MCF 10A (cell line): ENCODE measurements at regions of chr2 and their contacts with region 1.

Region 1: DNA sequence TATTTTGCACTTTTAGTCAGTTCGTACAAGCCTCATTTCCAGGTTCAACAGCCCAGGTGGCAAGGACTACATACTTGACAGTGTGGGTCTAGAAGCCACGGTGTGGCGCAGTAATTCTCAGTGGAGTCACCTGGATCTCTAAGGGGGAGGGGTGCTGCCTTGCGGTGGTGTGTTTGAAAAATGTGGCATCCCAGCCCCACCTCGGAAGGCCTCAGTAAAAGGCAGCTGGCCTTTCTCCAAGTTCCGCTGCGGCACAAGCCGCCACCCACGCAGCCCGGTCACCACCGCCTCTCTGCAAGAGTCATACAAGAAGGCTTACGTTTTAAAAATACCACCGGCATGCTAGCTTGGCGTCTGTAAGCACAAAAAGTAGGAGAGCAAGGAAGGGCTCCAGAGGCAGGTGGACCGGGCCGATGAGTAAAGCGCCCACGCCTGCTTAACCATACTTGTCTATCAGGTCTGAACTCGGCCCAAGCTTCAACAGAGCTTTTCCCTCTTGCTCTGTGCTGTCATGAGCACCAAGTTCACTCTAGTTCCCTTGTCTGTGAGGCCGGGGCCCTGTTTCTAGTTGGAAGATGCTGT is 49.5 kb downstream of the SPRED2 start:
- DNase-seq: peak; percentile 94
- H3K4me3 Mint-ChIP-seq: peak overlapping the region; percentile 59
- H3K27ac Mint-ChIP-seq: peak overlapping the region; percentile 81
- H3K4me1 Mint-ChIP-seq: peaks cover 60% of the 10 kb centered on the region
- H3K27me3 Mint-ChIP-seq: no peaks in the 10 kb centered on the region
- CTCF ChIP-seq: no peak

Region 2: DNA sequence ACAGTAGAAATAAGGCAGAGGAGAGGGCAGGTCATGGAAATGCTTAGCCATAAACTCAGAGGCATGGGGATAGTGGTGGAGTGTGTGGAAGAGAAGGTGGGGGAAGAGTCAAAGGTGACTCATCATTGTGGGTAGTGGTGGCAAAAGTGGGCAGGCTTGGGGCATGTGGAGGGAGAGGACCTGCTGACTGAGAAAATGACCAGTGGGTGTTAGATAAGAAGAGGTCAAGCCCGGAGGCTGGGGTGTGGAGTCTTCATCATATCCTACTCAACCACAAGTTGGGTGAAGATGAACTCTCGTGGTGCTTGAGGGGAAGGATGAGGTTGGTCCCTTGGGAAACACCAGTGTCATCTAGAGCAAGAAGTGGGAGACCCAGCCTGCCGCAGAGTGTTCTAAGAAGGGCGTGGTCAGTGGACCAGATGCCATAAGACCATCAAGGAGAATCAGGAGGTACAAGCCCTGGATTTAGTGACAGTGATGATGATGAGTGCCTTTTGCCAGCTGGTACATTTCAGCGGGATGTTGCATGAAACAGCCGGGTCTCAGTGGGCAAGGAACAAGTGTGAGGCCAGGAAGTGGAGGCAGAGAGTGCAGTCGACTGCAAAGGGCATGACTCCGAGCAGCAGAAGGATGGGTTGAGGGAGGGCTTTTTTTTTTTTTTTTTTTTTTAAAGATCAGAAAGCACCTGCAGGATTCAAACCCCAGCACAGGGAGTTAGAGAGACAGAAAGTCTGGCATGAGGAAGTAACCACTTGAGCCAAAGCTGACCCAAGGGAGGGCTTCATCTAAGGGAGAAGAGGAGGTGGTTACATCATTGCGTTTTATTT is 172.1 kb after region 1 on chr2:
- CTCF ChIA-PET with region 1: no interaction called
- POLR2A ChIA-PET with region 1: no interaction called
- intact Hi-C with region 1: loop called (anchors 1 kb)
- DNase-seq: no peak
- H3K4me3 Mint-ChIP-seq: no peak overlapping the region
- H3K27ac Mint-ChIP-seq: no peak overlapping the region
- H3K4me1 Mint-ChIP-seq: peaks cover 22% of the 10 kb centered on the region
- H3K27me3 Mint-ChIP-seq: no peaks in the 10 kb centered on the region
- CTCF ChIP-seq: no peak

Region 3: GRCh38 chr2:65566620-65567019 is 183.8 kb after region 1 on chr2:
- CTCF ChIA-PET with region 1: interaction called, 4 read pairs
- POLR2A ChIA-PET with region 1: interaction called, 5 read pairs
- intact Hi-C with region 1: loop called (anchors 5 kb)
- DNase-seq: peak; percentile 73
- H3K4me3 Mint-ChIP-seq: peak overlapping the region; percentile 79
- H3K27ac Mint-ChIP-seq: peak overlapping the region; percentile 92
- H3K4me1 Mint-ChIP-seq: peaks cover 31% of the 10 kb centered on the region
- H3K27me3 Mint-ChIP-seq: no peaks in the 10 kb centered on the region
- CTCF ChIP-seq: no peak